ENCODE measurements at regions of chr13 and their contacts with region 1.

Region 1: DNA sequence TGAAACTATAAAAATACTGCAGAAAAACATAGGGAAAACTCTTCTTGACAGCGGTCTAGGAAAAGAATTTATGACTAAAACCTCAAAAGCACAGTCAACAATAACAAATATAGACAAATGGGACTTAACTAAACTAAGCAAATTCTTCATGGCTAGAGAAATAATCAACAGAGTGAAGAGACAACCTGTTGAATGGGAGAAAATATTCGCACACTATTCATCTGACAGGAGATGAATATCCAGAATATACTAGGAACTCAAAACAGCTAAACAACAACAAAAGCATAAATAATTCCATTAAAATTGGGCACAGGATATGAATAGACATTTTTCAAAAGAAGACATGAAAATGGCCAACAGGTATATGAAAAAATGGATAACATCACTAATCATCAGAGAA is 303.6 kb upstream of the PRR20A start:
- DNase-seq: no peak
- ATAC-seq: no peak
- H3K4me3 ChIP-seq: no peak overlapping the region
- H3K4me3 Mint-ChIP-seq: no peak overlapping the region
- H3K27ac ChIP-seq: no peak overlapping the region
- H3K27ac Mint-ChIP-seq: no peak overlapping the region
- H3K4me1 ChIP-seq: no peaks in the 10 kb centered on the region
- H3K4me1 Mint-ChIP-seq: no peaks in the 10 kb centered on the region
- H3K27me3 ChIP-seq: no peaks in the 10 kb centered on the region
- H3K27me3 Mint-ChIP-seq: no peaks in the 10 kb centered on the region

Region 2: GRCh38 chr13:56755181-56755940 is 81.8 kb before region 1 on chr13:
- CTCF ChIA-PET with region 1: no interaction called
- POLR2A ChIA-PET with region 1: no interaction called
- intact Hi-C with region 1: no loop called
- DNase-seq: no peak
- ATAC-seq: no peak
- H3K4me3 ChIP-seq: no peak overlapping the region
- H3K4me3 Mint-ChIP-seq: no peak overlapping the region
- H3K27ac ChIP-seq: no peak overlapping the region
- H3K27ac Mint-ChIP-seq: no peak overlapping the region
- H3K4me1 ChIP-seq: no peaks in the 10 kb centered on the region
- H3K4me1 Mint-ChIP-seq: no peaks in the 10 kb centered on the region
- H3K27me3 ChIP-seq: no peaks in the 10 kb centered on the region
- H3K27me3 Mint-ChIP-seq: no peaks in the 10 kb centered on the region

Region 3: DNA sequence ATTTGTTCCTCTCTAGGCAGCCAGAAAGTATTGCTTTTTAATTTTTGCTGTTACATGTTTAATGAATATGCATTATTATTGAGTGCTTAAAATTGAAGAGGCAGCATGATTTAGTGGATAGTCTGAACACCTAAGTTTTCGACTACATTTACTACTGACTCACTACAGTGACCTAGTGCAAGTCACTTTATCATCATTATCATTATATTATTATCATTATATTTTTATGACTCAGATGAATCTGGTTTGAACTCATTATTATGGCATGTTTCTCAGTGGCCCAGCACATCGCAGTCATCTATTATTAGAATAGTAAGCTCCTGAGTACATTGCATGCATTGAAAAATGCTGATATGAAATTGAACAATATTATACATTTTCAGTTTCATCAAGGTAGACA is 47.6 kb before region 1 on chr13:
- CTCF ChIA-PET with region 1: no interaction called
- POLR2A ChIA-PET with region 1: no interaction called
- intact Hi-C with region 1: loop called in 1 of 2 experiments (anchors 5 kb)
- DNase-seq: no peak
- ATAC-seq: no peak
- H3K4me3 ChIP-seq: no peak overlapping the region
- H3K4me3 Mint-ChIP-seq: no peak overlapping the region
- H3K27ac ChIP-seq: no peak overlapping the region
- H3K27ac Mint-ChIP-seq: no peak overlapping the region
- H3K4me1 ChIP-seq: no peaks in the 10 kb centered on the region
- H3K4me1 Mint-ChIP-seq: no peaks in the 10 kb centered on the region
- H3K27me3 ChIP-seq: no peaks in the 10 kb centered on the region
- H3K27me3 Mint-ChIP-seq: no peaks in the 10 kb centered on the region

Region 4: GRCh38 chr13:56988543-56988942 is 151.4 kb after region 1 on chr13:
- CTCF ChIA-PET with region 1: no interaction called
- POLR2A ChIA-PET with region 1: no interaction called
- intact Hi-C with region 1: no loop called
- DNase-seq: no peak
- ATAC-seq: no peak
- H3K4me3 ChIP-seq: no peak overlapping the region
- H3K4me3 Mint-ChIP-seq: no peak overlapping the region
- H3K27ac ChIP-seq: no peak overlapping the region
- H3K27ac Mint-ChIP-seq: no peak overlapping the region
- H3K4me1 ChIP-seq: no peaks in the 10 kb centered on the region
- H3K4me1 Mint-ChIP-seq: no peaks in the 10 kb centered on the region
- H3K27me3 ChIP-seq: no peaks in the 10 kb centered on the region
- H3K27me3 Mint-ChIP-seq: no peaks in the 10 kb centered on the region